Activated T-helper 2 cell treated with anti-CD3 and anti-CD28 coated beads, Interferon-gamma antibody, Interleukin-2, Interleukin-4, amounts not matched to agents 10 μg/mL and 5 μg/mL and 100 μg/mL, durations not matched to agents 14 hours and 24 hours and 36 hours (primary cell): ENCODE measurements at regions of chr2 and their contacts with region 1.

Region 1: GRCh38 chr2:70069049-70069448 is 18.2 kb upstream of the PCBP1 start:
- DNase-seq: peak; percentile 75
- H3K4me3 Mint-ChIP-seq: no peak overlapping the region
- H3K27ac Mint-ChIP-seq: peak overlapping the region; percentile 86
- H3K4me1 Mint-ChIP-seq: peaks cover 41% of the 10 kb centered on the region
- H3K27me3 Mint-ChIP-seq: no peaks in the 10 kb centered on the region

Region 2: GRCh38 chr2:69667805-69668382 is 401.2 kb before region 1 on chr2:
- intact Hi-C with region 1: no loop called
- DNase-seq: no peak
- H3K4me3 Mint-ChIP-seq: no peak overlapping the region
- H3K27ac Mint-ChIP-seq: no peak overlapping the region
- H3K4me1 Mint-ChIP-seq: peaks cover 10% of the 10 kb centered on the region
- H3K27me3 Mint-ChIP-seq: no peaks in the 10 kb centered on the region

Region 3: DNA sequence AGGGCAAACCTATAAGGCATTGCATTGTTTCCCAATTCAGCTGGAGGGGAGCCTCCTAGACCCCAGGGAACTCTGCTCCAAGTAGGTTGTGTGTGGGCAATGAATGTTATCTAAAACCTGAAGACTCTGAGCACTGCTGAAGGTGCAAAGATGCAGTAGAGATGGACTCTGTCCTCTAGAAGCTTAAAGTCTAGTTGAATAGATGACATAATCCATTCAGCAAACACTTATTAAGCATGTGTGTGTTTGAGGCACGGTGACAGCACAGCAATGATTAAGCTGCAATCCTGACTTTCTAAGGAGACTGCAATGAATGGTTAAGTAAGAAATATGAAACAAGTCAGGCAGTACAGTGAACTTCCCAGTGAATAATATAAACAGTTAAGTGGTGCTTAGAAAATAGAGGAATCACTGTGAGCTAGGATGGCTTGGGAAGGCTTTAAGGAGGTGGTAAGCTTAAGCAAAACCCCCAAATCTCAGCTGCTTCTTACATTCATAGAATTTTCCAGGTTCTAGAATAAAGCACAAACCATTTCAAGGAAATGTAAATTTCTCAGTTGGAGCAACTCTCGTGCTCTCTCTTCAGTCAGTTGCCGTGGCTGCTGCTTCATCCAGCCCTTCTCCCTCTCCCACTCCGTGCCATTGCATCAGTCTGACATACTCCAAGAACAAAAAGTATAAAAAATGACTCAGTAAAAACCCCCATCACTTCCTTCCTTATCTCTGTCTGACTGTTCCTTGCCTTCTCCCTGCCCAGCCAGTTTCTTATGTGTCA is 135.0 kb before region 1 on chr2:
- intact Hi-C with region 1: loop called (anchors 5 kb)
- DNase-seq: no peak
- H3K4me3 Mint-ChIP-seq: no peak overlapping the region
- H3K27ac Mint-ChIP-seq: peak overlapping the region; percentile 25
- H3K4me1 Mint-ChIP-seq: peaks cover 25% of the 10 kb centered on the region
- H3K27me3 Mint-ChIP-seq: no peaks in the 10 kb centered on the region

Region 4: DNA sequence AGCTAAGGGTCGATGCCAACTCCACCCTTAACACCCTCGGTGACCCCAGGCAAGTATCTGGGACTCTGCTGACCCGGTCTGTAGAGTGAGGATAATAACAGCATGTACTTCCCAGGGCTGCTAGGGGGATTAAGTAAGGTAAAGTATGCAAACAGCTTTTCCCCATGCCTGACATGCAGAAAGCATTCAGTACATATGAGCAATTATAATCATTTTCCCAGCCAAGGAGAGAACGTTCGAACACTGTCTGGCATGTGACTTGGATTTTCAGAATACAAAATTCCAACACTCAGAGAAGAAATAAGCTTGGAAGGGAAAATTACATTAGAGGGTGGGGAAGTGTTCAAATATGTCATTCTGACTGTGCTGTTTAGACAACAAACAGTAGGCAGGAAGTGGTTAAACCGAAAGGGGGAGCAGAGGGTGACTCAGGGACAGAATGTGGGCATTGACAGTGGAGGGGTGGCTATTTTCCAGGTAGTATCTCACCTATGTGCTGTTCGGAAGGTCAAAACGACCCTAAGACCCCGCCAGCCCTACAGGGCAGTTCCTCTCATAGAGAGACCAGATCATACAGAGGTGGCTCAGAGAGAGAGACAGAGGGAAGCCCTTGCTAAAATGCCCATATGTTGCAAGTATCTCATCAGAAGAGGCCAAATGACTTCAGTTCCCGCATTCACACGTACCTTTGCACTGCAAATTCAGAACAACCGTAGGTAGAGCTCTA is 122.5 kb before region 1 on chr2:
- intact Hi-C with region 1: loop called (anchors 1 kb)
- DNase-seq: peak; percentile 67
- H3K4me3 Mint-ChIP-seq: no peak overlapping the region
- H3K27ac Mint-ChIP-seq: peak overlapping the region; percentile 85
- H3K4me1 Mint-ChIP-seq: peaks cover 44% of the 10 kb centered on the region
- H3K27me3 Mint-ChIP-seq: peaks cover 2% of the 10 kb centered on the region